ENCODE measurements at regions of chr4 and their contacts with region 1.

Region 1: GRCh38 chr4:79357365-79357764 is 31.5 kb upstream of the NAA11 start:
- DNase-seq: no peak

Region 2: GRCh38 chr4:79290376-79290775 is 67.0 kb before region 1 on chr4:
- intact Hi-C with region 1: loop called in 1 of 2 experiments (anchors 2 kb)
- DNase-seq: no peak

Region 3: GRCh38 chr4:79334783-79335182 is 22.6 kb before region 1 on chr4:
- intact Hi-C with region 1: loop called in 1 of 2 experiments (anchors 1 kb)
- DNase-seq: no peak

Measured in posterior vena cava (tissue), 2 donors.